ENCODE measurements at regions of chr7 and their contacts with region 1.

Region 1: DNA sequence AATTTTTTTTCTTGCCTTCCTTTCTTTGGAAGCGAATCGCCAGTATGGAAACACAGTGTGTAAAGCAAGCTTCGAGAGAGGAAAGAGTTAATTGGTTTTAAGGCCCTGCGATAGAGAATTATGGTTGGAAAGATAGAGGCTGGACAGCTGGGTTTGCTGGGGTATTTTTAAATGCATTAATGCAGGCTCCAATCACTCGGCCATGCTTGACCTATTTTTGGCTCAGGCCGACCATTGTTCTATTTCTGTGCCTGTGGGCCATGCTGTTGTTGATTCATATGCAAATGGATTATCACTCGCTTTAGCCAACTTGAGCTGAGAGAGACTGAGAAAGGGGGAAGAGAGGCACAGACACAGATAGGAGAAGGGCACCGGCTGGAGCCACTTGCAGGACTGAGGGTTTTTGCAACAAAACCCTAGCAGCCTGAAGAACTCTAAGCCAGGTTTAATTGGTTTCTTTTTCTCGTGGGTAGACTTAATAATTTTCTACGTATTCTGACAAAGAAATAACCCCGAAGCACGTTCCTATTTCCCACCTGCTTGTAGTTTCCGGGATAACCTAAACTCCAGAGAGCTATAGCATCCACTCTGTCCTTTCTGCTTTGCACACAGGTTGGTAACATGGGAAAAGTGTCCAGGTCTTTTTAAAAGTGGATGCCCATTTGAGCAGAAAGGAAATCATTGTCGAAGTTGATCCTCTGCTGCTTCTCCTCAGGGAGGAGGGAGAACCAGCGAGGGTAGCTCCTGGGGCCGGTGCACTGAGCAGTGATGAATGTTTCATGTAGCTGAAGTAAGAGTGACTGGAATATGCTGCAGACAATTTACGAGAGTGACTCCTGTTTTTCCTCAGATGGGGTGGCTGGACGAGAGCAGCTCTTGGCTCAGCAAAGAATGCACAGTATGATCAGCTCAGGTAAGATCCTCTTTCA is at the start of gene HDAC9:
- DNase-seq: peak; percentile 49
- H3K4me3 ChIP-seq: peak within 1 kb of the TSS; percentile 63 to 67
- H3K27ac ChIP-seq: peak within 1 kb of the TSS; percentile 80 to 100
- H3K4me1 ChIP-seq: peaks cover 8 to 53% of the 10 kb centered on the region in 2 experiments; a peak in 3 of 4 replicates
- H3K27me3 ChIP-seq: no peaks in the 10 kb centered on the region
- CTCF ChIP-seq: no peak
- EP300 ChIP-seq: peak; percentile 62 to 93; a peak in 2 of 4 replicates
- RAD21 ChIP-seq: peak; percentile 43
- polyA plus RNA-seq, gene HDAC9: 11.6 and 19.8 TPM in 2 replicates

Region 2: GRCh38 chr7:18426564-18427226 is 69.0 kb before region 1 on chr7:
- CTCF ChIA-PET with region 1: no interaction called
- POLR2A ChIA-PET with region 1: no interaction called
- DNase-seq: no peak
- H3K4me3 ChIP-seq: no peak overlapping the region
- H3K27ac ChIP-seq: peak overlapping the region; percentile 18 to 20; a peak in 2 of 4 replicates
- H3K4me1 ChIP-seq: peaks cover under 1 to 22% of the 10 kb centered on the region in 2 experiments; a peak in 2 of 4 replicates
- H3K27me3 ChIP-seq: no peaks in the 10 kb centered on the region
- CTCF ChIP-seq: no peak
- EP300 ChIP-seq: no peak
- RAD21 ChIP-seq: no peak

Region 3: DNA sequence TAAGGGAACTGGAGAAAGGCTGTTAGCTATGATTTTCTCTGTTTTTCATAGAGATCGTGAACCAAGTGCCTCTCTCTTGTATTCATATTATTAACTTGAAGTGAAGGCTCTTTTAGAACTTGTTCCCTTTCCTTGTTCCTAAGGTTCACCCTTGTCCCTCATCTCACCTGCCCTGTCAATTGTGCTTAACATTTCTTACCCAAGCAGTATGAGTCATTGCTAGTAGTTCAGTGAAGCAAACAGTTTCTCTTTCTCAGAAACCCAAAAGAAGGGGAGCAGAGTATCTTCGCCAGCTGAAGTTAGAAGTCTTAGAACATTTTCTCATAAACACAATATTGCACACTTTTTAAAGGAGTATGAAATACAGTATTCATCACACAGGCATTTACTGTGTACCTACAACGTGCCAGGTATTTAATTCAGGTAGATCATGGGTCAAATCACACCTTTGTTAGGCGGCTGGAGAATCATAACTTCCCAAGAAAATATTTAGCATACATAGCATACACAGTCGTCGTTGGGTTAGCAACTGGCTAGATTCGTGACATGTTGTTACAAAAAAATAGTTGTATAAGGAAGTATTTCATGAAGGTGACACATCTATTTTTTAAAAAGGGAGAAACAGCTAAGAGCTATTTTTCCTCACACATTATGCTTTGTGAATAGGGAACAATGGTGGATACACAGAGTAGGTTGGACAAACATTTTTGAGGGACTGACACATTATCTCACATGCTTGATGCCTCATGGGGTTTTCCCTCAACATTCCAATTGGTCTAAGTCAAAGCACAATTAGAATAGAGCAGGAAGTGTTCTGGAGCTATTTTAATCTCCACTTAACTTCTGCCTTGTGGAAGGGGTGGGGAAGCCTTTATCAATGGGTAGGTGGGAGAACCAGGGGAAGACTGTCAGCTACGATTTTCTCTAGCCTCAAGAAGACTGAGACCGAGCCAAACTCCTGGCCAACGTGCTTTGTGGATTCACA is 13.1 kb after region 1 on chr7:
- CTCF ChIA-PET with region 1: interaction called, 34 read pairs
- POLR2A ChIA-PET with region 1: interaction called, 8 read pairs
- DNase-seq: no peak
- H3K4me3 ChIP-seq: peak overlapping the region; percentile 49 to 69; a peak in 3 of 4 replicates
- H3K27ac ChIP-seq: peak overlapping the region; percentile 87 to 99
- H3K4me1 ChIP-seq: peaks cover 13 to 26% of the 10 kb centered on the region in 2 experiments
- H3K27me3 ChIP-seq: no peaks in the 10 kb centered on the region
- CTCF ChIP-seq: no peak
- EP300 ChIP-seq: peak; percentile 6 to 94; a peak in 3 of 4 replicates
- RAD21 ChIP-seq: no peak